AG04449 (cell line): ENCODE measurements at regions of chr1 and their contacts with region 1.

Region 1: GRCh38 chr1:112715264-112716053 is at the start of gene PPM1J:
- DNase-seq: no peak
- H3K4me3 ChIP-seq: peak within 1 kb of the TSS; percentile 68
- CTCF ChIP-seq: no peak

Region 2: DNA sequence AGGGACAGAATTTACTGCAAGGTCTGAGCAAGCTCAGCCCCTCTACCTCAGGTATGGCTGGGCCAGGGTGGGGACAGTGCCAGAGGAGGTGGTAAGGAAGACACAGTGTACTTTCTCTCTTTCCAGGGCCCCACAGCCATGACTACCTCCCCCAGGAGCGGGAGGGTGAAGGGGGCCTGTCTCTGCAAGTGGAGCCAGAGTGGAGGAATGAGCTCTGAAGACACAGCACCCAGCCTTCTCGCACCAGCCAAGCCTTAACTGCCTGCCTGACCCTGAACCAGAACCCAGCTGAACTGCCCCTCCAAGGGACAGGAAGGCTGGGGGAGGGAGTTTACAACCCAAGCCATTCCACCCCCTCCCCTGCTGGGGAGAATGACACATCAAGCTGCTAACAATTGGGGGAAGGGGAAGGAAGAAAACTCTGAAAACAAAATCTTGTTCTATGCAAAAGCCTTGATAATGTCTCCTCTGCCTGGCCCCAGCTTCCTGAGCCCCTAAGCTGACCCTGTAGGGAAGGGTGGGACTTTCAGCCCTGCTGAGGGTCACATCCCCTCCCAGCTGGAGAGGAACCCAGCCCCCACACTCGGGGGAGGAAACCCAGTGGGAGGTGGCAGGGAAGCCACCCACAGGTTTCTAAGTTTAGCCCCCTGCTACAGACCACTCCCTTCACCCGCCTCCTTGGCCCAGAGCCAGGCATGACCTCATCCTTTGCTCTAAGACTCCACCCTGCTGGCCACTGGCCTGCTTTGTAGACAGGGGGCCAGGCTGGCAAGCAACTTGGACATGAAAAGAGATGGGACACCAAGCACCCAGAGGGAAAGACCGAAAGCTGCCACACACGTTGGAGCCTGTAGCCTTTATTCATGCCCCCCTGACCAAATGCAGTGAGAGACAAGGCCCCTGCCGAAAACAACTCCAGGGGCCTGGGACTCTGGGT is 14.9 kb before region 1 on chr1:
- CTCF ChIA-PET with region 1: interaction called, 36 read pairs
- POLR2A ChIA-PET with region 1: interaction called, 11 read pairs
- DNase-seq: peak; percentile 74
- H3K4me3 ChIP-seq: peak overlapping the region; percentile 25
- CTCF ChIP-seq: peak; percentile 1

Region 3: DNA sequence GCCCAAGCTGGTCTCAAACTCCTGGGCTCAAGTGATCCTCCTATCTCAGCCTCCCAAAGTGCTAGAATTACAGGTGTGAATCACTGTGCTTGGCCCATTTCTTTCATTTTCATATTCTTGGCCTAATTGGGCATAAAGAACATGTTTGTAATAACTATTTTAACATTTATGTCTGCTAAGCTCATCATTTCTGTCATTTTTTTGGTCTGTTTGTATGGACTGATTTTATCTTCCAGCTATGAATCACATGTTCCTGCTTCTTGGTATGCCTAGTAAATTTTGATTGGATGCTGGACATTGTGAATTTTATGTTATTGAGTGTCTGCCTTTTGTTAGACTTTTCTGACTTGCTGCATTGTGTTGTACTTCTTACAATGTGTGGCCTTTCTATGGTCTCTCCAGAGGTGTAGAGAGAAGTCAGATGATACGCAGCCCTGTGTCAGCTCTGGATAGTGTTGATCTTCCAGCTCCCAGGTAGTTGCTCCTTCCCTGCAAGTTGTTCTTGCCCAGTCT is 38.7 kb after region 1 on chr1:
- CTCF ChIA-PET with region 1: interaction called, 264 read pairs
- POLR2A ChIA-PET with region 1: no interaction called
- DNase-seq: no peak
- H3K4me3 ChIP-seq: no peak overlapping the region
- CTCF ChIP-seq: no peak

Region 4: GRCh38 chr1:112788561-112788960 is 73.1 kb after region 1 on chr1:
- CTCF ChIA-PET with region 1: interaction called, 45 read pairs
- POLR2A ChIA-PET with region 1: no interaction called
- DNase-seq: no peak
- H3K4me3 ChIP-seq: no peak overlapping the region
- CTCF ChIP-seq: no peak

Region 5: GRCh38 chr1:112809253-112809684 is 93.8 kb after region 1 on chr1:
- CTCF ChIA-PET with region 1: interaction called, 1,029 read pairs
- POLR2A ChIA-PET with region 1: interaction called, 3 read pairs
- DNase-seq: no peak
- H3K4me3 ChIP-seq: no peak overlapping the region
- CTCF ChIP-seq: peak; percentile 97

Region 6: DNA sequence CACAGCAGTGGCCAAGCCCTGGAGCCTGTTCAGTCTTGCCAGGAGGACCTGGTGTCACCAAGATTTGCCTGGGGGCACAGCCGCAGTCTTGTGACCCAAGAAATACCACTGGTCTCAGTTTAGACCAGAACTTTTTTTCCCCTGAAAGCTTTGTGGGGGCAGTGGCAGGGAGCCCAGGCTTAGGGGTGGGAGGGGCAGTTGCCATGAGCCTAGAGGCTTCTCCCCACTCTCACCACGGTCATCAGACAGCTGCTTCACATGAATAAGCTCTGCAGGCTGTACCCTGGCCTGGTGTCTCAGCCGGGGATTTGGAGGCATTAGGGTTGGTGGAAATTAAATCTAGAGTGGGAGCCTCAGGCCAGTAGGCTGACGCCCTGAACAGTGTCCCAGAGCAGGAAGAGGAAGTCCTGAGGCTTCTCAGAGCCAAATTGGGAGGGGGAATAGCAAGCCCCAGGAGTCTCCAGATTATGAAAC is 166.8 kb after region 1 on chr1:
- CTCF ChIA-PET with region 1: interaction called, 22 read pairs
- POLR2A ChIA-PET with region 1: no interaction called
- DNase-seq: no peak
- H3K4me3 ChIP-seq: no peak overlapping the region
- CTCF ChIP-seq: no peak